ENCODE measurements at regions of chr1 and their contacts with region 1.

Region 1: DNA sequence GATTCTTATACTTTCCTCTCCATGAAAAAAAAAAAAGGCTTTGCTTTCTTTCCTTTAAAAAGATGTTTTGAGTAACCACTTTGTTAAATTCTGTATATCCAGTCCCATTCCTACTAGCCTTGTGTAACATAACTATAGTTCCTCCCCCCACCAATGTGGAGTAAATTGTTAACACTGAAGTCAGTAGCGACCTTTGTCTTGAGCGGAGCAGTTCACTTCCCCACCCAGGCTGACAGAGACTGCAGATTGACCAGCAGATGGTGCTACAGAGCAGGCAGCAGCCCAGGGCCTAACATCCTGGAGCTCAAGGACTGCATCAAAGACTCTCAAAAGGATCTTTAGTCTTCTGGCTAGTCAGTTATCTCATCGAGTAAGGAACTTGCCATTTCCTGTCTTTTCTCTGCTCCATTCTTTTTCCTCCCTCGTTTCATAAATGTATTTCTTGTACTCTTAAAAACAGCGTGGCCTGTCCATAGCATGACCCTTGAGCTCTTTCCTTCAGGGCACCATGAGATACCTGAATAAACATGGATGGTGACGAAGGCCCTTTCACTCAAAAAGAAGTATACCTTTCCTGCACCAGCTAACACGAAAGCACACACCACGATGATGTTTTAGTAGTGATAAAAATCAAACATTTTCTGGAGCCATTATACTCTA is 503.5 kb upstream of the PKN2 start:
- ATAC-seq: peak; percentile 97 to 100 (median 100)
- H3K4me3 ChIP-seq: no peak overlapping the region
- H3K27ac ChIP-seq: no peak overlapping the region
- H3K4me1 ChIP-seq: peaks cover 0 to 40% of the 10 kb centered on the region in 2 donors

Region 2: GRCh38 chr1:88291611-88292354 is 111.2 kb after region 1 on chr1:
- in situ Hi-C with region 1: loop called in 2 of 9 experiments (anchors 10 kb)
- ATAC-seq: no peak
- H3K4me3 ChIP-seq: no peak overlapping the region
- H3K27ac ChIP-seq: no peak overlapping the region
- H3K4me1 ChIP-seq: peaks cover 0 to 7% of the 10 kb centered on the region in 2 donors

Region 3: DNA sequence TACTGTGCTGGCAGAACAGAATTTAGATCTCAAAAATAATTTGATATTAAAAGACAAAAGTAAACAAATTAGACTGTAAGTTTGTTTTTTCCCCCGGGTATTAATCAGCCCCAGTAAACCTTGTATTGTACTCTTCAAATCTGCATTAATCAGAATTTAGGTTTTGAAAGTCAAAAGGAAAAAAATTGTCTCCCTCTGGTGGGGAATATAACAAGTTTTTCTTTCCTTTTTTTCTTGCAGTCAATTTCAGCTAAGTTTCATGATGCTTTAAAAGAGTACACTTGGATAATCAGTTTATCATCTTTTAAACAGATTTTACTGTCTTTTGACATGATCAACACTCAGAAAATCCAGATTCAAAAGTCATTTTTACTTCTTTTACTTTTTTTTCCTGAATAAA is 369.0 kb after region 1 on chr1:
- in situ Hi-C with region 1: loop called in 1 of 9 experiments (anchors 25 kb)
- ATAC-seq: no peak
- H3K4me3 ChIP-seq: no peak overlapping the region
- H3K27ac ChIP-seq: no peak overlapping the region
- H3K4me1 ChIP-seq: no peaks in the 10 kb centered on the region

Region 4: DNA sequence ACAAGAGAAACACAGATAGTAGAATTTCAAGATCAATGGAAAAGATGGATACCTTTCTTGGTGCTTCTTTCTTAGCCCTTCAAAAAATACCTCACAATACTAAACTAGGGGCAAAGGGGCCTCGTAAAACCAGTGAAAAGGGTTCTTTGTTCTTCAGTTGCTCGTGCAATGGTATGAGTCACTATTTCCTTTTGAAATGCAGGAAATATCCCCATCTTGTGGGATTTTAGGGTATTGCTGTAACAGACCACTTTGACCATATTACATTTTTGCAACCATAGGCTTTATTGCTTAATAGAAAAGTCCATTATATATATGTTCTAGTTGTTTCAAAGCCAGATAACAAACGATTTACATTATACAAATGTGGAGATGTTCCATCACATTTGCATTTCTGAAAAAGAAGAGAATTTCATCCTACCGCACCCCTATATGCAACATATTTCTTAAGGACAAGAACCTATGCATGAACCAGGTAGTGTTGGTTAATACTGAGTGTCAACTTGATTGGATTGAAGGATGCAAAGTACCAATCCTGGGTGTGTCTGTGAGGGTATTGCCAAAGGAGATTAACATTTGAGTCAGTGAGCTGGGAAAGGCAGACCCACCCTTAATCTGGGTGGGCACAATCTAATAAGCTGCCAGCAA is 414.9 kb after region 1 on chr1:
- in situ Hi-C with region 1: loop called in 1 of 9 experiments (anchors 25 kb)
- ATAC-seq: peak in 3 of 8 experiments; percentile 36 to 80 (median 75)
- H3K4me3 ChIP-seq: no peak overlapping the region
- H3K27ac ChIP-seq: no peak overlapping the region
- H3K4me1 ChIP-seq: no peaks in the 10 kb centered on the region

Measured in motor neuron (in vitro differentiated cells).